PC-3 (cell line): ENCODE measurements at regions of chr12 and their contacts with region 1.

Region 1: GRCh38 chr12:98516184-98516873 is 939 bp downstream of the TMPO start:
- DNase-seq: peak; percentile 89
- ATAC-seq: peak; percentile 45
- H3K4me3 ChIP-seq: peak overlapping the region; percentile 98
- H3K27ac ChIP-seq: peak overlapping the region; percentile 89
- H3K4me1 ChIP-seq: peaks cover 31% of the 10 kb centered on the region
- H3K27me3 ChIP-seq: no peaks in the 10 kb centered on the region
- CTCF ChIP-seq: peak; percentile 83

Region 2: GRCh38 chr12:98221243-98221808 is 295.0 kb before region 1 on chr12:
- CTCF ChIA-PET with region 1: no interaction called
- POLR2A ChIA-PET with region 1: no interaction called
- intact Hi-C with region 1: no loop called
- DNase-seq: no peak
- ATAC-seq: no peak
- H3K4me3 ChIP-seq: no peak overlapping the region
- H3K27ac ChIP-seq: no peak overlapping the region
- H3K4me1 ChIP-seq: no peaks in the 10 kb centered on the region
- H3K27me3 ChIP-seq: peaks cover 35% of the 10 kb centered on the region
- CTCF ChIP-seq: no peak

Region 3: GRCh38 chr12:98317939-98318899 is 198.1 kb before region 1 on chr12:
- CTCF ChIA-PET with region 1: no interaction called
- POLR2A ChIA-PET with region 1: no interaction called
- intact Hi-C with region 1: no loop called
- DNase-seq: no peak
- ATAC-seq: no peak
- H3K4me3 ChIP-seq: no peak overlapping the region
- H3K27ac ChIP-seq: no peak overlapping the region
- H3K4me1 ChIP-seq: no peaks in the 10 kb centered on the region
- H3K27me3 ChIP-seq: peaks cover 10% of the 10 kb centered on the region
- CTCF ChIP-seq: no peak

Region 4: GRCh38 chr12:98470469-98471082 is 45.8 kb before region 1 on chr12:
- CTCF ChIA-PET with region 1: no interaction called
- POLR2A ChIA-PET with region 1: no interaction called
- intact Hi-C with region 1: no loop called
- DNase-seq: peak; percentile 21
- ATAC-seq: no peak
- H3K4me3 ChIP-seq: no peak overlapping the region
- H3K27ac ChIP-seq: no peak overlapping the region
- H3K4me1 ChIP-seq: peaks cover 10% of the 10 kb centered on the region
- H3K27me3 ChIP-seq: no peaks in the 10 kb centered on the region
- CTCF ChIP-seq: no peak

Region 5: GRCh38 chr12:98490501-98491453 is 25.6 kb before region 1 on chr12:
- CTCF ChIA-PET with region 1: interaction called, 3 read pairs
- POLR2A ChIA-PET with region 1: no interaction called
- intact Hi-C with region 1: loop called (anchors 1 kb)
- DNase-seq: peak; percentile 90
- ATAC-seq: peak; percentile 90
- H3K4me3 ChIP-seq: peak overlapping the region; percentile 50
- H3K27ac ChIP-seq: peak overlapping the region; percentile 33
- H3K4me1 ChIP-seq: peaks cover 16% of the 10 kb centered on the region
- H3K27me3 ChIP-seq: no peaks in the 10 kb centered on the region
- CTCF ChIP-seq: peak; percentile 87